PC-3 (cell line): ENCODE measurements at regions of chr9 and their contacts with region 1.

Region 1: GRCh38 chr9:106862825-106863720 is at the start of gene ZNF462:
- DNase-seq: peak; percentile 42
- ATAC-seq: peak; percentile 19
- H3K4me3 ChIP-seq: peak within 1 kb of the TSS; percentile 98
- H3K27ac ChIP-seq: peak within 1 kb of the TSS; percentile 67
- H3K4me1 ChIP-seq: peaks cover 49% of the 10 kb centered on the region
- H3K27me3 ChIP-seq: no peaks in the 10 kb centered on the region
- CTCF ChIP-seq: peak; percentile 54; the same call in 1 of the 2 replicates
- total RNA-seq, gene ZNF462: 21.2 and 23.4 TPM in 2 replicates

Region 2: GRCh38 chr9:105901514-105902109 is 961.5 kb before region 1 on chr9:
- CTCF ChIA-PET with region 1: no interaction called
- POLR2A ChIA-PET with region 1: no interaction called
- intact Hi-C with region 1: loop called (anchors 1 kb)
- DNase-seq: peak; percentile 67
- ATAC-seq: peak; percentile 94
- H3K4me3 ChIP-seq: no peak overlapping the region
- H3K27ac ChIP-seq: no peak overlapping the region
- H3K4me1 ChIP-seq: no peaks in the 10 kb centered on the region
- H3K27me3 ChIP-seq: no peaks in the 10 kb centered on the region
- CTCF ChIP-seq: peak; percentile 85

Region 3: GRCh38 chr9:106432631-106433030 is 430.4 kb before region 1 on chr9:
- CTCF ChIA-PET with region 1: no interaction called
- POLR2A ChIA-PET with region 1: no interaction called
- intact Hi-C with region 1: loop called (anchors 5 kb)
- DNase-seq: peak; percentile 78
- ATAC-seq: peak; percentile 98
- H3K4me3 ChIP-seq: no peak overlapping the region
- H3K27ac ChIP-seq: peak overlapping the region; percentile 59
- H3K4me1 ChIP-seq: peaks cover 19% of the 10 kb centered on the region
- H3K27me3 ChIP-seq: no peaks in the 10 kb centered on the region
- CTCF ChIP-seq: no peak; the same call in 1 of the 2 replicates

Region 4: GRCh38 chr9:106717686-106718085 is 145.4 kb before region 1 on chr9:
- CTCF ChIA-PET with region 1: no interaction called
- POLR2A ChIA-PET with region 1: no interaction called
- intact Hi-C with region 1: loop called (anchors 5 kb)
- DNase-seq: peak; percentile 78
- ATAC-seq: peak; percentile 79
- H3K4me3 ChIP-seq: peak overlapping the region; percentile 24; the same call in 1 of the 2 replicates
- H3K27ac ChIP-seq: peak overlapping the region; percentile 63
- H3K4me1 ChIP-seq: peaks cover 31% of the 10 kb centered on the region
- H3K27me3 ChIP-seq: no peaks in the 10 kb centered on the region
- CTCF ChIP-seq: peak; percentile 28; the same call in 1 of the 2 replicates

Region 5: GRCh38 chr9:106875529-106875928 is 12.5 kb after region 1 on chr9:
- CTCF ChIA-PET with region 1: no interaction called
- POLR2A ChIA-PET with region 1: no interaction called
- intact Hi-C with region 1: no loop called
- DNase-seq: peak; percentile 38
- ATAC-seq: peak; percentile 30; the same call in 1 of the 2 replicates
- H3K4me3 ChIP-seq: no peak overlapping the region
- H3K27ac ChIP-seq: no peak overlapping the region
- H3K4me1 ChIP-seq: peaks cover 16% of the 10 kb centered on the region; the same call in 1 of the 2 replicates
- H3K27me3 ChIP-seq: no peaks in the 10 kb centered on the region
- CTCF ChIP-seq: no peak

Region 6: DNA sequence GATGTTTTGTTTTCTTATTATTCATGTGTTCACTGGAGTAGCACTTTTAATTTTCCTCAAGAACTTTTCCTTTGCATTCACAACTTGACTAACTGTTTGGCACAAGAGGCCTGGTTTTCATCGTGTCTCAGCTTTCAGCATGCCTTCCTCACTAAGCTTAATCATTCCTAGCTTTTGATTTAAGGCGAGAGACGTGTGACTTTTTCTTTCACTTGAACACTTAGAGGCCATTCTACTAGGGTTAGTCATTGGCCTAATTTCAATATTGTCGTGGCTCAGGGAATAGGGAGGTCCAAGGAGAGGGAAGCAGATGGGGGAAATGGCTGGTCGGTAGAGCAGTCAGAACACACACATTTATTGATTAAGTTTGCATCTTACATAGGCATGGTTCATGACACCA is 93.9 kb after region 1 on chr9:
- CTCF ChIA-PET with region 1: no interaction called
- POLR2A ChIA-PET with region 1: no interaction called
- intact Hi-C with region 1: loop called (anchors 5 kb)
- DNase-seq: no peak
- ATAC-seq: no peak
- H3K4me3 ChIP-seq: no peak overlapping the region
- H3K27ac ChIP-seq: no peak overlapping the region
- H3K4me1 ChIP-seq: peaks cover 80% of the 10 kb centered on the region
- H3K27me3 ChIP-seq: no peaks in the 10 kb centered on the region
- CTCF ChIP-seq: no peak

Region 7: DNA sequence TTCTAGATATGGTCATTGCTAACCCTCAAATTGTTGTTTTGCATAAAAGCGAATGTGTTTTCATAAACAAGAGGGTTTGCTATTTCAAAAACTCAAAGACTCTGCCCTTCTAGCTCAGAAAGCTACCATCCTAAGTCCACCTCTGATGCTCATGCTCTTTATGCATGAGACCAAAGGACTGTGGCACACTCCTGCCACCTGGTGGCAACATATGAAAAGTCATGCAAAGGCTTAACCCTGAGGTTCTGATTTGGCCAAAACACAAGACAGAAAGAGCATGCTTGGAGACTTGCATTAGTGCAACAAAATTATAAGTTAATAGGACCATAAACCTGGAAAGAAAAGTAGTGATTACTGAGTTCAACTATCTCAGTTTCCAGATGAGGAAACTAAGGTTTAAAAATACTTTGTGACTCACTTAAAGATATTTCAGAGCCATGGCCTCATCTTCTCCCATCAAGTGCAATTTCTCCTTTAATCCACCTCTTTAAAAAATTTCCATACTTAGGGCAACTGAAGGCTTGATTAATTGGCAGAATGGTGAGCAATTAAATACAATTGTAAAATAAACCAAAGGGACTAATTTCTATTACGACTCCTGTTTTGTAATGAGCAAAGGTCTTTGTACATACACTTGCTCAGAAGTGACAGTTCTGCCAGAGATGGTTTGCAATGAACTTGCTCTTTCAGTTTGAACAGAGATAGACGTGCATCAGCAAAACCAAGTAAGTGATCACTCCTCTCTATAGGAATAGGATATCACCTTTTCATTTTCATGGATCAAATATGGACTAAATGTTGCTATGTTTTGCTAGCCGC is 309.3 kb after region 1 on chr9:
- CTCF ChIA-PET with region 1: interaction called, 3 read pairs
- POLR2A ChIA-PET with region 1: no interaction called
- intact Hi-C with region 1: loop called (anchors 10 kb)
- DNase-seq: peak; percentile 84
- ATAC-seq: peak; percentile 88
- H3K4me3 ChIP-seq: no peak overlapping the region
- H3K27ac ChIP-seq: no peak overlapping the region
- H3K4me1 ChIP-seq: peaks cover 6% of the 10 kb centered on the region; the same call in 1 of the 2 replicates
- H3K27me3 ChIP-seq: no peaks in the 10 kb centered on the region
- CTCF ChIP-seq: peak; percentile 88